HEK293 (cell line): ENCODE measurements at regions of chr7 and their contacts with region 1.

Region 1: GRCh38 chr7:17706734-17707133 is 233.6 kb downstream of the SNX13 start:
- H3K4me3 ChIP-seq: no peak overlapping the region
- H3K27ac ChIP-seq: no peak overlapping the region
- H3K4me1 ChIP-seq: no peaks in the 10 kb centered on the region
- CTCF ChIP-seq: no peak

Region 2: GRCh38 chr7:17195576-17195975 is 511.2 kb before region 1 on chr7:
- CTCF ChIA-PET with region 1: no interaction called
- POLR2A ChIA-PET with region 1: no interaction called
- H3K4me3 ChIP-seq: no peak overlapping the region
- H3K27ac ChIP-seq: no peak overlapping the region
- H3K4me1 ChIP-seq: no peaks in the 10 kb centered on the region
- CTCF ChIP-seq: no peak

Region 3: DNA sequence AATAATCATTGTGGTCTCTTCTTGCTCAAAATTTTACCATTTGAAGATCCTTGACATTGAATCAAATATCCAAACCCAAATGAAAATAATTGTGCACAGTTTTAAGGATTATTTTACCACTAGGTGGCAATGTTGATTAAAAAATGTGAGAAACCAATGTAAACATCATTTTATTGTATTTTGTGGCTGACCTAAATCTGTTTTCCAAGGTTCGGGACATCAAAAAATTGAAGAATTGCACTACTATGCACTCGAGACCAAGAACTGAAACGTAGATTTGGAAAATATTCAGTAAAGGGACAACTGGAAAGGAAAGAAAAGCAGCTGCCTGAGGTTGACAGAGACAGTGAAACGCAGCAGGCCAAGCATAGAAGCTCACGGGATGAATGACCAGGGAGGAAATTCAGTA is 25.8 kb before region 1 on chr7:
- CTCF ChIA-PET with region 1: interaction called, 11 read pairs
- POLR2A ChIA-PET with region 1: no interaction called
- H3K4me3 ChIP-seq: no peak overlapping the region
- H3K27ac ChIP-seq: no peak overlapping the region
- H3K4me1 ChIP-seq: no peaks in the 10 kb centered on the region
- CTCF ChIP-seq: no peak

Region 4: GRCh38 chr7:18345641-18346234 is 639.0 kb after region 1 on chr7:
- CTCF ChIA-PET with region 1: interaction called, 11 read pairs
- POLR2A ChIA-PET with region 1: no interaction called
- H3K4me3 ChIP-seq: no peak overlapping the region
- H3K27ac ChIP-seq: no peak overlapping the region
- H3K4me1 ChIP-seq: no peaks in the 10 kb centered on the region
- CTCF ChIP-seq: 0 out of 2 replicates have a peak, but pooled peaks have one; percentile 52